MCF 10A (cell line): ENCODE measurements at regions of chr5 and their contacts with region 1.

Region 1: DNA sequence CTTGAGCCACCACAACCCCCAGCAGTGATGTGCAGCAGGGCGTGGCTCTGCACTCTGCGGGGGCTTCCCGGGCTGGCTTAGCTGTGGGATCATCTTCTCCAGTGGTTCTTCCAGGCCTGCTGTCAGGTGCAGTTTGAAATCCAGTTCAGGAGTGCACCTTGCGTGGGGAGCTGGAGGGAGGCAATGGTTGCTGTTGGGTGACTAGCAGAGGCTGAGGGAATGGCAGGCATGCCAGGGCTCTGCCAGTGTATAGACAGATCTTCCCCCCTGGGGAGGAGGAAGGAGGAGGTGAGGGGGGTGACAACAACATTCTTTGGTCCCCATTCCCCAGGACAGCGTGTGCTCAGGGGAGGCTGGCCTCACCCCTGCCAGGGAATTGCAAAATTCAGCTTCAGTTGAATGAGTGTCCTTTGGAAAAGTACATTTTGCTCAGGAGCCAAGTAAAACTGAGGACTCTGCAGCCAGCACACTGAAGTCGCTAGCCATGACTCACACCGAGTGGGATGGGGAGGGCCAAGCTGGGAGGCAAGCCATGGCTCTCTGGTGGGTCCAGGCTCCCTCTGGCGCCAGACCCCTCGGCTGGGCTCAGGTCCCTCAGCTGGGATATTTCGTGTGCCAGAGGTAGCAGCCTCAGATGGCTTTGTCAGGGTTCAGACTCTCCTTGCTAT is 35.0 kb downstream of the ERGIC1 start:
- DNase-seq: peak; percentile 99
- H3K4me3 Mint-ChIP-seq: no peak overlapping the region
- H3K27ac Mint-ChIP-seq: no peak overlapping the region
- H3K4me1 Mint-ChIP-seq: peaks cover 15% of the 10 kb centered on the region
- H3K27me3 Mint-ChIP-seq: no peaks in the 10 kb centered on the region
- CTCF ChIP-seq: no peak

Region 2: GRCh38 chr5:172733131-172733973 is 135.7 kb before region 1 on chr5:
- CTCF ChIA-PET with region 1: no interaction called
- POLR2A ChIA-PET with region 1: interaction called, 32 read pairs
- intact Hi-C with region 1: no loop called
- DNase-seq: peak; percentile 93
- H3K4me3 Mint-ChIP-seq: peak overlapping the region; percentile 63
- H3K27ac Mint-ChIP-seq: peak overlapping the region; percentile 99
- H3K4me1 Mint-ChIP-seq: peaks cover 44% of the 10 kb centered on the region
- H3K27me3 Mint-ChIP-seq: no peaks in the 10 kb centered on the region
- CTCF ChIP-seq: peak; percentile 18

Region 3: GRCh38 chr5:172795318-172795977 is 73.6 kb before region 1 on chr5:
- CTCF ChIA-PET with region 1: interaction called, 15 read pairs
- POLR2A ChIA-PET with region 1: interaction called, 58 read pairs
- intact Hi-C with region 1: no loop called
- DNase-seq: peak; percentile 96
- H3K4me3 Mint-ChIP-seq: peak overlapping the region; percentile 21
- H3K27ac Mint-ChIP-seq: peak overlapping the region; percentile 79
- H3K4me1 Mint-ChIP-seq: peaks cover 50% of the 10 kb centered on the region
- H3K27me3 Mint-ChIP-seq: no peaks in the 10 kb centered on the region
- CTCF ChIP-seq: no peak

Region 4: GRCh38 chr5:172816901-172817564 is 52.0 kb before region 1 on chr5:
- CTCF ChIA-PET with region 1: interaction called, 3 read pairs
- POLR2A ChIA-PET with region 1: interaction called, 11 read pairs
- intact Hi-C with region 1: no loop called
- DNase-seq: peak; percentile 91
- H3K4me3 Mint-ChIP-seq: peak overlapping the region; percentile 38
- H3K27ac Mint-ChIP-seq: peak overlapping the region; percentile 20
- H3K4me1 Mint-ChIP-seq: peaks cover 31% of the 10 kb centered on the region
- H3K27me3 Mint-ChIP-seq: no peaks in the 10 kb centered on the region
- CTCF ChIP-seq: no peak

Region 5: GRCh38 chr5:172849606-172850453 is 19.2 kb before region 1 on chr5:
- CTCF ChIA-PET with region 1: interaction called, 6 read pairs
- POLR2A ChIA-PET with region 1: interaction called, 53 read pairs
- intact Hi-C with region 1: no loop called
- DNase-seq: peak; percentile 68
- H3K4me3 Mint-ChIP-seq: no peak overlapping the region
- H3K27ac Mint-ChIP-seq: peak overlapping the region; percentile 49
- H3K4me1 Mint-ChIP-seq: peaks cover 78% of the 10 kb centered on the region
- H3K27me3 Mint-ChIP-seq: no peaks in the 10 kb centered on the region
- CTCF ChIP-seq: no peak

Region 6: DNA sequence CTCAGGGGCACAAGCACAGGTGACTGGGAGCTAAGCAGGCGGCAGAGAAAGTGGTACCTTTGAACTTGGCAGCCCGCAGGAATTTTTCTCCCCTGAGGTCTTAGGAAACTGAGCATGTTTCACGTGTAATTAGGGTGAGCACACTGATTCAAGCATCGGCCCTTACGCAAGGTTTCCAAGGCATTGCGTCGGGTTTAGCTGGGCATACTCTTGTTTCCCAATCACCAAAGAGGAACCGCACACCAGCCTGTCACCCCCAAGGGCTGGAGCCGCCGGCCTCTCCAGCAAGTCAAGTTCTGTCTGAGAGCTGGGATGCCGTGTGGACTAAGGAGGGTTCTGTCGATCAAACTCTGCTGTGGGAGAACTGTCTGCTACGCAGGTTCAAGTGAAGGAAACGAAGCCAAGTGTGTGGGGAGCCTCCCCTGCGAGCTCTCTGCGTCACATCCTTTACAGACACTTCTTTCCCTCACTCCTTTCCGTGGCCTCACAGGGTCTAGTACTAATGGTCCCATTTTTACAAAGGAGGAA is 18.0 kb after region 1 on chr5:
- CTCF ChIA-PET with region 1: interaction called, 15 read pairs
- POLR2A ChIA-PET with region 1: interaction called, 83 read pairs
- intact Hi-C with region 1: loop called (anchors 2 kb)
- DNase-seq: peak; percentile 100
- H3K4me3 Mint-ChIP-seq: peak overlapping the region; percentile 61
- H3K27ac Mint-ChIP-seq: peak overlapping the region; percentile 98
- H3K4me1 Mint-ChIP-seq: peaks cover 46% of the 10 kb centered on the region
- H3K27me3 Mint-ChIP-seq: no peaks in the 10 kb centered on the region
- CTCF ChIP-seq: no peak

Region 7: DNA sequence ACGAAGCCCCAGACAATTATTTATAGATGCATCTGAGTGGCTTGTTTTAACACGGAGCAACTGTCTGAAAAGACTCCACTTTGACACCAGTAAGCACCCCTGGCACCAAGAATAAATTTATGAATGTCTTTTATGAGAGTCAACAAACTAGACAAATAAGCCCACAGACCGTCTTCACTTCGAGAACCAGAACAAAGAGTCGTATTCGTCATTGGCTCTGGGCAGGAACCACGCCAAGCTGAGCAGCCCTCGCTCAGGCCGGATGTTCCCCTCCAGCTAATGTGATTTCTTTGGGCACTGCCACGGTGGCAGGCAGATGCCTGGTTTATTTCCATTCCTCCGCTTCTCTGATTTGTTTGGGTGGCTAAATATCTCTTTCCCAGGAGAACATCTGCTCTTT is 551.0 kb after region 1 on chr5:
- CTCF ChIA-PET with region 1: no interaction called
- POLR2A ChIA-PET with region 1: no interaction called
- intact Hi-C with region 1: no loop called
- DNase-seq: no peak
- H3K4me3 Mint-ChIP-seq: no peak overlapping the region
- H3K27ac Mint-ChIP-seq: no peak overlapping the region
- H3K4me1 Mint-ChIP-seq: no peaks in the 10 kb centered on the region
- H3K27me3 Mint-ChIP-seq: no peaks in the 10 kb centered on the region
- CTCF ChIP-seq: no peak